Natural killer cell (primary cell): ENCODE measurements at regions of chr12 and their contacts with region 1.

Region 1: GRCh38 chr12:45990468-45991283 is at the start of gene SCAF11:
- DNase-seq: peak; percentile 100
- ATAC-seq: peak; percentile 83 to 96 (median 85)
- H3K4me3 ChIP-seq: peak within 1 kb of the TSS; percentile 69
- H3K4me3 Mint-ChIP-seq: peak within 1 kb of the TSS; percentile 96
- H3K27ac ChIP-seq: peak within 1 kb of the TSS; percentile 89
- H3K27ac Mint-ChIP-seq: peak within 1 kb of the TSS; percentile 98
- H3K4me1 ChIP-seq: peaks cover 12% of the 10 kb centered on the region
- H3K4me1 Mint-ChIP-seq: peaks cover 49 to 52% of the 10 kb centered on the region in 2 donors
- H3K27me3 ChIP-seq: no peaks in the 10 kb centered on the region
- H3K27me3 Mint-ChIP-seq: peaks cover 0 to 2% of the 10 kb centered on the region in 2 donors
- CTCF ChIP-seq: peak; percentile 78
- total RNA-seq, gene SCAF11: 208 to 232 (median 220) TPM

Region 2: GRCh38 chr12:45878630-45879255 is 111.9 kb before region 1 on chr12:
- intact Hi-C with region 1: loop called (anchors 2 kb)
- DNase-seq: peak; percentile 37 to 53
- ATAC-seq: peak; percentile 74 to 80 (median 80)
- H3K4me3 ChIP-seq: no peak overlapping the region
- H3K4me3 Mint-ChIP-seq: peak overlapping the region; percentile 81
- H3K27ac ChIP-seq: peak overlapping the region; percentile 83
- H3K27ac Mint-ChIP-seq: peak overlapping the region; percentile 78 to 95
- H3K4me1 ChIP-seq: peaks cover 11% of the 10 kb centered on the region
- H3K4me1 Mint-ChIP-seq: peaks cover 59 to 66% of the 10 kb centered on the region in 2 donors
- H3K27me3 ChIP-seq: no peaks in the 10 kb centered on the region
- H3K27me3 Mint-ChIP-seq: no peaks in the 10 kb centered on the region
- CTCF ChIP-seq: no peak

Region 3: DNA sequence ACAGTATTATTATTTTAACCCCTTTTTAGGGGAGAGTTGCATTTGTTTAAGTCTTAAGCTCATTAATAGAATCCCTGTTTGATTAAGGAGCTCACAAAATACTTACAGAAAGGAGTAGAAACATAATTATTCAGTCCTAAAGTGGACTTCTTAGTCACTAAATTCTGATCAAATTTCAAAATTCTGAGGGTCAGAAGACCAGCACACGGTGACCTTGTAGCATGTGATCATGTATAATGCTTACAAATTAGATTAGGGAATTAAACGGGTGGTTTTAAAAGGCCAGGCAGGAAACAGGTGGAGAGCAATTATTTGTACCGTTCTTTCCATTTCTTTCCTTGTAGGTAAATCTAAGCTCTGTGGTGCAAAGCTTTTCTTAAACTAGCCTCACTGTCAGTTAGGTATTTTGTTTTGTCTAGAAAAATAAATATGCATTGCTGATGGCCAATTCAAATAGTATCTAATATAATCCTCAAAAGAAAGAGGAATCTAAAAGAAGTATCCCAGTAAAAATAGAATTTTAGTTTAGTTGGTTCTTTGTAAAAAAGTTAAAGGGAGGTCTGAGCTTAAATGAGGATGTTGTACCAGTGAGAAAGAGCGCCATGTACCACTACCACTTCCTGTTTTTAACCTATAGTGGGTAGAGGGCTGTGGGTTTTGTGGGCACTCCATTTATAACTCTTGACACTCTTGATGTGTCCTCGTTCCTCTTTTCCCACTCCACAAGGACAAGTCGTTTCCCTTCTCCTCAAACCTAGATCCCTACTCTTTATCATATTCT is 227.1 kb after region 1 on chr12:
- intact Hi-C with region 1: loop called (anchors 5 kb)
- DNase-seq: peak; percentile 57 to 85
- ATAC-seq: peak; percentile 11 to 55 (median 32)
- H3K4me3 ChIP-seq: peak overlapping the region; percentile 8
- H3K4me3 Mint-ChIP-seq: peak overlapping the region; percentile 85
- H3K27ac ChIP-seq: peak overlapping the region; percentile 87
- H3K27ac Mint-ChIP-seq: peak overlapping the region; percentile 97 to 98
- H3K4me1 ChIP-seq: peaks cover 54% of the 10 kb centered on the region
- H3K4me1 Mint-ChIP-seq: peaks cover 90 to 97% of the 10 kb centered on the region in 2 donors
- H3K27me3 ChIP-seq: no peaks in the 10 kb centered on the region
- H3K27me3 Mint-ChIP-seq: no peaks in the 10 kb centered on the region
- CTCF ChIP-seq: no peak